Sciatic nerve (tissue), 2 donors: ENCODE measurements at regions of chr1 and their contacts with region 1.

Region 1: GRCh38 chr1:91282695-91283420 is 121.8 kb downstream of the HFM1 start:
- DNase-seq: peak; percentile 73
- ATAC-seq: peak; percentile 78

Region 2: DNA sequence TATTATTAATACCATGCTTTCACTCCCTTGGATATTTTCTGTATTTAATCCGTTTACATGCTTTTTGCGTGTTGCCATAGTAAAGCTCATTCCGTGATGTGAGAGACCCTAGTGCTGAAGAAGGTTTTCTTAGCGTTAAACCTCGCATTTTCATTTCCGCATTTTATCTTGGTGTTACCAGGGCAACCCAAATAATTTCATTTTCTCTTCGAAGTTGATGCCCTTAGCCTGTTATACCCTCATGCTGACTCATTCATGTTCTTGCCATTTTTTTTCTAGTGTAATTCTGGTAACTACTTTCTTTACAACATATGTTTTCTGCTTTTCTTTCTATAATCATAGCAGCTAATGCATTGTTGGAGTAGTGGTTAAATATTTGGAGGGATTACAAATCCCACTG is 1612.7 kb before region 1 on chr1:
- intact Hi-C with region 1: no loop called
- DNase-seq: no peak
- ATAC-seq: peak; percentile 60

Region 3: GRCh38 chr1:91244737-91245136 is 38.1 kb before region 1 on chr1:
- intact Hi-C with region 1: loop called (anchors 2 kb)
- DNase-seq: no peak
- ATAC-seq: no peak